K562 (cell line): ENCODE measurements at regions of chr5 and their contacts with region 1.

Region 1: GRCh38 chr5:157718519-157718918 is 12.7 kb upstream of the THG1L start:
- DNase-seq: peak; percentile 22 to 62 (median 42)
- ATAC-seq: peak; percentile 96
- H3K4me3 ChIP-seq: no peak overlapping the region
- H3K27ac ChIP-seq: no peak overlapping the region
- H3K4me1 ChIP-seq: peaks cover 3 to 5% of the 10 kb centered on the region in 2 experiments; a peak in 2 of 5 replicates
- H3K27me3 ChIP-seq: no peaks in the 10 kb centered on the region
- CTCF ChIP-seq: peak; percentile 51 to 75 (median 54); a peak in 4 of 6 replicates
- EP300 ChIP-seq: no peak
- POLR2A ChIP-seq: no peak
- RAD21 ChIP-seq: peak; percentile 76 to 83

Region 2: GRCh38 chr5:157342822-157343402 is 375.6 kb before region 1 on chr5:
- CTCF ChIA-PET with region 1: interaction called, 3 read pairs
- POLR2A ChIA-PET with region 1: no interaction called
- in situ Hi-C with region 1: no loop called
- intact Hi-C with region 1: loop called (anchors 5 kb)
- DNase-seq: peak; percentile 49 to 61 (median 52)
- ATAC-seq: peak; percentile 92
- H3K4me3 ChIP-seq: no peak overlapping the region
- H3K27ac ChIP-seq: no peak overlapping the region
- H3K4me1 ChIP-seq: no peaks in the 10 kb centered on the region
- H3K27me3 ChIP-seq: peaks cover 6 to 15% of the 10 kb centered on the region in 2 experiments; a peak in 4 of 5 replicates
- CTCF ChIP-seq: peak; percentile 67 to 75 (median 67)
- EP300 ChIP-seq: no peak
- POLR2A ChIP-seq: no peak
- RAD21 ChIP-seq: peak; percentile 41 to 57

Region 3: GRCh38 chr5:157366741-157367674 is 351.5 kb before region 1 on chr5:
- CTCF ChIA-PET with region 1: interaction called, 4 read pairs
- POLR2A ChIA-PET with region 1: no interaction called
- in situ Hi-C with region 1: no loop called
- intact Hi-C with region 1: loop called (anchors 5 kb)
- DNase-seq: peak; percentile 19 to 39 (median 24)
- ATAC-seq: peak; percentile 82
- H3K4me3 ChIP-seq: no peak overlapping the region
- H3K27ac ChIP-seq: no peak overlapping the region
- H3K4me1 ChIP-seq: peaks cover 0 to 8% of the 10 kb centered on the region in 2 experiments; a peak in 4 of 5 replicates
- H3K27me3 ChIP-seq: 0 out of 5 replicates have a peak, but pooled peaks cover 0 to 8% of the 10 kb centered on the region in 2 experiments
- CTCF ChIP-seq: peak; percentile 48 to 66 (median 57); a peak in 4 of 6 replicates
- EP300 ChIP-seq: no peak
- POLR2A ChIP-seq: no peak
- RAD21 ChIP-seq: peak; percentile 28 to 60; a peak in 3 of 4 replicates

Region 4: GRCh38 chr5:157431544-157432200 is 286.8 kb before region 1 on chr5:
- CTCF ChIA-PET with region 1: interaction called, 6 read pairs
- POLR2A ChIA-PET with region 1: no interaction called
- in situ Hi-C with region 1: no loop called
- intact Hi-C with region 1: loop called (anchors 1 kb)
- DNase-seq: peak in 1 of 4 experiments; percentile 43
- ATAC-seq: peak; percentile 81
- H3K4me3 ChIP-seq: no peak overlapping the region
- H3K27ac ChIP-seq: no peak overlapping the region
- H3K4me1 ChIP-seq: no peaks in the 10 kb centered on the region
- H3K27me3 ChIP-seq: no peaks in the 10 kb centered on the region
- CTCF ChIP-seq: peak; percentile 54 to 63 (median 55)
- EP300 ChIP-seq: no peak
- POLR2A ChIP-seq: no peak
- RAD21 ChIP-seq: peak; percentile 75 to 77

Region 5: DNA sequence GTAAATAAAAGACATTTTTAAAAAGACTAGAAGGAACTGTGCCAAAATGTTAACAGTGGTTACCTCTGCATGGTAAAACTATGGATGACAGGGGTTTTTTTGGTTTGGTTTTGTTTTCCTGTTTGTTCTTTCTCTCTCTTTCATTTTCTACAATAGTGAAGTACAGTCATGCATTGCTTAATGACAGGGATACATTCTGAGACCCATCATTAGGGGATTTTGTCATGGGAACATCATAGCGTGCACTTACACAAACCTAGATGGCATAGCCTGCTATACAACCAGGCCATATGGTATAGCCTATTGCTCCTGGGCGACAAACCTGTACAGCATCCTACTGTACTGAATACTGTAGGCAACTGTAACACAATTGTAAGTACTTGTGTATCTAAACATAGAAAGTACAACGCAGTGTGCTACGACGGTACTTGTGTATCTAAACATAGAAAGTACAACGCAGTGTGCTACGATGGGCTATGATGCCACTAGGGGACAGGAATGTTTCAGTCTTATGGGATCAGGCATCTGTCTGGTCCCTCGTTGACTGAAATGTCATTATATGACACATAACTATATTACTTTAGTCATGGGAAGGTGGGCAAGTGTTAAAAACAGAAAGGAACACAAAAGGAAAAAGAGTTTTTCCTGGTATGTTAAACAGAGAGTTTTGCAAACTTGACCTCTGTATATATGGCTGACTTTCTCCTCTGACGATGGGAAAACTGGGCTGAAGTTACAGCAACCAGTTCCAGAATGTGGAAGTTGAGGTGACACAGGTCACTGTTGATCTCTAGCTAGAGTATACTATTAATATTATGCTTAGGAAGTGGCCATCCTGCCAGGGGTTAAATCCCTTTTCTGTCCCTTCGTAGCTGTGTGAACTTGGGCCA is 135.5 kb before region 1 on chr5:
- CTCF ChIA-PET with region 1: no interaction called
- POLR2A ChIA-PET with region 1: no interaction called
- in situ Hi-C with region 1: no loop called
- intact Hi-C with region 1: loop called (anchors 5 kb)
- DNase-seq: no peak
- ATAC-seq: peak; percentile 67
- H3K4me3 ChIP-seq: no peak overlapping the region
- H3K27ac ChIP-seq: no peak overlapping the region
- H3K4me1 ChIP-seq: no peaks in the 10 kb centered on the region
- H3K27me3 ChIP-seq: no peaks in the 10 kb centered on the region
- CTCF ChIP-seq: peak in 1 of 3 experiments; percentile 34; a peak in 1 of 6 replicates
- EP300 ChIP-seq: no peak
- POLR2A ChIP-seq: no peak
- RAD21 ChIP-seq: peak in 1 of 2 experiments; percentile 47; a peak in 2 of 4 replicates

Region 6: GRCh38 chr5:157611571-157612476 is 106.7 kb before region 1 on chr5:
- CTCF ChIA-PET with region 1: no interaction called
- POLR2A ChIA-PET with region 1: no interaction called
- in situ Hi-C with region 1: no loop called
- intact Hi-C with region 1: no loop called
- DNase-seq: peak in 1 of 4 experiments; percentile 17
- ATAC-seq: peak; percentile 20
- H3K4me3 ChIP-seq: no peak overlapping the region
- H3K27ac ChIP-seq: peak overlapping the region; percentile 31
- H3K4me1 ChIP-seq: peaks cover 11 to 32% of the 10 kb centered on the region in 2 experiments; a peak in 4 of 5 replicates
- H3K27me3 ChIP-seq: no peaks in the 10 kb centered on the region; a peak in 1 of 5 replicates
- CTCF ChIP-seq: no peak
- EP300 ChIP-seq: no peak
- POLR2A ChIP-seq: no peak
- RAD21 ChIP-seq: no peak

Region 7: DNA sequence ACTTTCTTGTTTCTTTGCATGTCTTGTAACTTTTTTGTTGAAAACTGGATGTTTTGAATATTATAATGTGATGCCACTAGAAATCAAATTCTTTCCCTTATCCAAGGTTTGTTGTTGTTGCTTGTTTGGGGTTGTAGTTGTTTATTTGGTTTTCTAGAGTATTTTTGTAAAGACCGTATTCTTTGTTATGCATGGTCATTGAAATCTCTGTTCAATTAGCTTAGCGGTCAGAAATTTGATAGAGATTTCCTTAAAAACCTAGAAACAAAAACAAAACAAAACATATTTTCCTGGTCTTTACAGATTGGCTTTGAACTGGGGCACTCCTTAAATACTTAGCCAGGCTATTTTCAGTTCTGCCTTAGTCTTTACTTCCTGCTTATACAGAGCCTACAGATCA is 88.2 kb before region 1 on chr5:
- CTCF ChIA-PET with region 1: no interaction called
- POLR2A ChIA-PET with region 1: no interaction called
- in situ Hi-C with region 1: no loop called
- intact Hi-C with region 1: no loop called
- DNase-seq: no peak
- ATAC-seq: no peak
- H3K4me3 ChIP-seq: no peak overlapping the region
- H3K27ac ChIP-seq: no peak overlapping the region
- H3K4me1 ChIP-seq: no peaks in the 10 kb centered on the region; a peak in 1 of 5 replicates
- H3K27me3 ChIP-seq: no peaks in the 10 kb centered on the region
- CTCF ChIP-seq: no peak
- EP300 ChIP-seq: no peak
- POLR2A ChIP-seq: no peak
- RAD21 ChIP-seq: no peak

Region 8: GRCh38 chr5:157669701-157670097 is 48.8 kb before region 1 on chr5:
- CTCF ChIA-PET with region 1: no interaction called
- POLR2A ChIA-PET with region 1: no interaction called
- in situ Hi-C with region 1: no loop called
- intact Hi-C with region 1: loop called (anchors 1 kb)
- DNase-seq: no peak
- ATAC-seq: no peak
- H3K4me3 ChIP-seq: no peak overlapping the region
- H3K27ac ChIP-seq: no peak overlapping the region
- H3K4me1 ChIP-seq: peaks cover 0 to 10% of the 10 kb centered on the region in 2 experiments; a peak in 1 of 5 replicates
- H3K27me3 ChIP-seq: peaks cover 0 to 25% of the 10 kb centered on the region in 2 experiments; a peak in 2 of 5 replicates
- CTCF ChIP-seq: no peak
- EP300 ChIP-seq: no peak
- POLR2A ChIP-seq: no peak
- RAD21 ChIP-seq: no peak

Region 9: GRCh38 chr5:157855404-157855994 is 137.0 kb after region 1 on chr5:
- CTCF ChIA-PET with region 1: no interaction called
- POLR2A ChIA-PET with region 1: no interaction called
- in situ Hi-C with region 1: no loop called
- intact Hi-C with region 1: no loop called
- DNase-seq: peak; percentile 31 to 62 (median 41)
- ATAC-seq: peak; percentile 47
- H3K4me3 ChIP-seq: no peak overlapping the region
- H3K27ac ChIP-seq: no peak overlapping the region
- H3K4me1 ChIP-seq: peaks cover 7 to 21% of the 10 kb centered on the region in 2 experiments
- H3K27me3 ChIP-seq: no peaks in the 10 kb centered on the region
- CTCF ChIP-seq: peak; percentile 60 to 79 (median 67)
- EP300 ChIP-seq: no peak
- POLR2A ChIP-seq: no peak
- RAD21 ChIP-seq: peak; percentile 67 to 72